ENCODE measurements at regions of chr10 and their contacts with region 1.

Region 1: GRCh38 chr10:98467506-98468346 is 21.0 kb upstream of the HPS1 start:
- DNase-seq: peak; percentile 41 to 76 (median 63)
- H3K4me3 ChIP-seq: peak overlapping the region; percentile 76
- H3K4me3 Mint-ChIP-seq: peak overlapping the region; percentile 90 to 99 (median 97)
- H3K27ac ChIP-seq: no peak overlapping the region
- H3K27ac Mint-ChIP-seq: peak overlapping the region in 7 of 8 donors; percentile 86 to 98 (median 94)
- H3K4me1 ChIP-seq: no peaks in the 10 kb centered on the region
- H3K4me1 Mint-ChIP-seq: peaks cover 5 to 11% (median 9%) of the 10 kb centered on the region in 3 donors
- H3K27me3 ChIP-seq: no peaks in the 10 kb centered on the region
- H3K27me3 Mint-ChIP-seq: peaks cover 4 to 5% of the 10 kb centered on the region in 2 donors

Region 2: GRCh38 chr10:98262571-98262970 is 205.2 kb before region 1 on chr10:
- CTCF ChIA-PET with region 1: no interaction called
- POLR2A ChIA-PET with region 1: no interaction called
- DNase-seq: no peak
- H3K4me3 ChIP-seq: no peak overlapping the region
- H3K4me3 Mint-ChIP-seq: peak overlapping the region in 1 of 7 donors; percentile 27
- H3K27ac ChIP-seq: no peak overlapping the region
- H3K27ac Mint-ChIP-seq: no peak overlapping the region
- H3K4me1 ChIP-seq: peaks cover under 1% of the 10 kb centered on the region
- H3K4me1 Mint-ChIP-seq: peaks cover 0 to 6% (median under 1%) of the 10 kb centered on the region in 3 donors
- H3K27me3 ChIP-seq: no peaks in the 10 kb centered on the region
- H3K27me3 Mint-ChIP-seq: peaks cover 11 to 19% of the 10 kb centered on the region in 2 donors

Region 3: DNA sequence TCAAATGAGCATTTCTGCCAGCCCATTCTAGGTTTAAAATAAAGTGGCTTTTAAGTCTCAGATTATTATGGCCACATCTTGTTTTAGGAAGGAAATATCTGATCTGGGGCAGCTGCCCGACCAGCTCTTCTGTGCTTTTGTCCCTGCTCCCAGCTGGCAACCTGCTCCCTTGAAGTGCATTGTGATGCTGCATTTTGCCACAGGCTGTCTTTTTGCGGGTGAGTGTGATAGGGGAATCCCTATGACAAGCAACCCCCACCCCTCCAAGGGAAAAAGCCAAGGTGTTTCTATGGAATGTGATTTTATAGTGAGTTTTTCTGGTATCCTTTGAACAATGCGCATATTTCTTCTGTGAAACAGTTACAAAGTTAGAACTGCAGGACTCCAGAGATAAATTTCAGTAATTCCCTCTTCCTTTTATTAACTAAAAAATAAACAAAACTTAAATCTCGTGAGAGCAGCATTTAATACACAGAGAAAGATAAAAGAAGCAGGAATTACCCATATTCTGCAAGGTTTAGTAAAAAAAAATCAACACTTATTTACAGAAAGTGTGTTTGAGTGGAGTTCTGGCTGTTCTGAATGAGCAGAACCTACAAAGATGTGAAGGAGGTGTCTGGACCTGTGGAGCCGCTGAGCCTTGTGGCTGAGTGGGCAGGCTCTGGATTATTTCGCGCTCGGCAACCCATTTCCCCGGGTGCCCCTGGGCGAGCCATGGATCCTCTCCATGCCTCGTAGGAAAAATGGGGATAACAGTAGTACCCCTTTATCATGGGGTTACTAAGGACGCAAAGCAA is 10.8 kb before region 1 on chr10:
- CTCF ChIA-PET with region 1: interaction called, 12 read pairs
- POLR2A ChIA-PET with region 1: no interaction called
- DNase-seq: no peak
- H3K4me3 ChIP-seq: no peak overlapping the region
- H3K4me3 Mint-ChIP-seq: no peak overlapping the region
- H3K27ac ChIP-seq: no peak overlapping the region
- H3K27ac Mint-ChIP-seq: no peak overlapping the region
- H3K4me1 ChIP-seq: no peaks in the 10 kb centered on the region
- H3K4me1 Mint-ChIP-seq: no peaks in the 10 kb centered on the region
- H3K27me3 ChIP-seq: peaks cover 3% of the 10 kb centered on the region
- H3K27me3 Mint-ChIP-seq: peaks cover 10 to 37% of the 10 kb centered on the region in 2 donors

Region 4: GRCh38 chr10:98478430-98479222 is 10.9 kb after region 1 on chr10:
- CTCF ChIA-PET with region 1: interaction called, 25 read pairs
- POLR2A ChIA-PET with region 1: no interaction called
- DNase-seq: no peak
- H3K4me3 ChIP-seq: no peak overlapping the region
- H3K4me3 Mint-ChIP-seq: no peak overlapping the region
- H3K27ac ChIP-seq: no peak overlapping the region
- H3K27ac Mint-ChIP-seq: no peak overlapping the region
- H3K4me1 ChIP-seq: no peaks in the 10 kb centered on the region
- H3K4me1 Mint-ChIP-seq: peaks cover 26 to 35% (median 32%) of the 10 kb centered on the region in 3 donors
- H3K27me3 ChIP-seq: no peaks in the 10 kb centered on the region
- H3K27me3 Mint-ChIP-seq: peaks cover 0 to 3% of the 10 kb centered on the region in 2 donors

Region 5: DNA sequence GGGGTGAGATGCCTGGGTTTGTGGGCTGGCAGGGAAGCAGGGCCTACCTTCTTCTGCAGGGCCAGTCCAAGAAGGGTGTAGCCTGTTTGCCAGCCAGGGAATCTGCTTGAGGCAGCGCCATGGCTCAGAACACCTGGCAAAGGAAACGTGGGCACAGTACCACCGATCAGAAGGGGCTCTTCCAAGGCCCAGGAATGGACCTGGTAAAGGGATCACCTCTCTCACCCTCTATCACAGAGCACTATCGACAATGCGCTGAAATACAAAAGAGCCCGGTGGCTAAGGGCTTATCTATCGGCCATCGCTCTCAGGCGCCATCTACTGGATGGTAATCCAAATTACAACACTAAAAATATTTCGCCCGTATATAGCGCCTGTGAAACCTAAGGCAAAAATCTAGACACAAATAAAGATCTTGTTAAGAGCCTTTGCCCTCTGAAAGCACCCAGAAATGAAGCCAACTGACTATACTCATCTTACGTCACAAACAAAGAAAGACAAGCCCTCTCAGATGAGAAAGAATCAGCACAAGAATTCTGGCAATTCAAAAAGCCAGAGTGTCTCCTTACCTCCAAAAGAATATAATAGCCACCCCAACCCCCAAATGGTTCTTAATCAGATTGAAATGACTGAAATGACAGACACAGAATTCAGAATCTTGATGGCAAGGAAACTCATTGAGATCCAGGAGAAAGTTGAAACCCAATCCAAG is 196.8 kb after region 1 on chr10:
- CTCF ChIA-PET with region 1: interaction called, 15 read pairs
- POLR2A ChIA-PET with region 1: no interaction called
- DNase-seq: peak; percentile 1 to 53 (median 17)
- H3K4me3 ChIP-seq: no peak overlapping the region
- H3K4me3 Mint-ChIP-seq: no peak overlapping the region
- H3K27ac ChIP-seq: no peak overlapping the region
- H3K27ac Mint-ChIP-seq: no peak overlapping the region
- H3K4me1 ChIP-seq: no peaks in the 10 kb centered on the region
- H3K4me1 Mint-ChIP-seq: no peaks in the 10 kb centered on the region
- H3K27me3 ChIP-seq: no peaks in the 10 kb centered on the region
- H3K27me3 Mint-ChIP-seq: peaks cover 15 to 43% of the 10 kb centered on the region in 2 donors

Region 6: DNA sequence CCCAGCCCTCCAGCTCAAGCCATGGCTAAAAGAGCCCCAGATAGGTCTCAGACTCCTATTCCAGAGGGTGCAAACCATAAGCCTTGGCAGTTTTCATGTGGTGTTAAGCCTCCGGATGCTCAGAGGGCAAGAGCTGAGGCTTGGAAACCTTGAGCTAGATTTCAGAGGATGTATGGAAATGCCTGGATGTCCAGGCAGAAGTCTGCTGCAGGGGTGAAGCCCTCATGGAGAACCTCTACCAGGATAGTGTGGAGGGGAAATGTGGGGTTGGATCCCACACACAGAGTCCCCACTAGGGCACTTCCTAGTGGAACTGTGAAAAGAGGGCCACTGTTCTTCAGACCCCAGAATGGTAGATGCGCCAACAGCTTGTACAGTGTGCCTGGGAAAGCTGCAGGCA is 781.1 kb after region 1 on chr10:
- CTCF ChIA-PET with region 1: interaction called, 21 read pairs
- POLR2A ChIA-PET with region 1: interaction called, 3 read pairs
- DNase-seq: no peak
- H3K4me3 ChIP-seq: no peak overlapping the region
- H3K4me3 Mint-ChIP-seq: no peak overlapping the region
- H3K27ac ChIP-seq: no peak overlapping the region
- H3K27ac Mint-ChIP-seq: no peak overlapping the region
- H3K4me1 ChIP-seq: no peaks in the 10 kb centered on the region
- H3K4me1 Mint-ChIP-seq: no peaks in the 10 kb centered on the region
- H3K27me3 ChIP-seq: no peaks in the 10 kb centered on the region
- H3K27me3 Mint-ChIP-seq: peaks cover 16 to 39% of the 10 kb centered on the region in 2 donors

Measured in CD8-positive, alpha-beta memory T cell (primary cell).